HEK293 (cell line): ENCODE measurements at regions of chr19 and their contacts with region 1.

Region 1: DNA sequence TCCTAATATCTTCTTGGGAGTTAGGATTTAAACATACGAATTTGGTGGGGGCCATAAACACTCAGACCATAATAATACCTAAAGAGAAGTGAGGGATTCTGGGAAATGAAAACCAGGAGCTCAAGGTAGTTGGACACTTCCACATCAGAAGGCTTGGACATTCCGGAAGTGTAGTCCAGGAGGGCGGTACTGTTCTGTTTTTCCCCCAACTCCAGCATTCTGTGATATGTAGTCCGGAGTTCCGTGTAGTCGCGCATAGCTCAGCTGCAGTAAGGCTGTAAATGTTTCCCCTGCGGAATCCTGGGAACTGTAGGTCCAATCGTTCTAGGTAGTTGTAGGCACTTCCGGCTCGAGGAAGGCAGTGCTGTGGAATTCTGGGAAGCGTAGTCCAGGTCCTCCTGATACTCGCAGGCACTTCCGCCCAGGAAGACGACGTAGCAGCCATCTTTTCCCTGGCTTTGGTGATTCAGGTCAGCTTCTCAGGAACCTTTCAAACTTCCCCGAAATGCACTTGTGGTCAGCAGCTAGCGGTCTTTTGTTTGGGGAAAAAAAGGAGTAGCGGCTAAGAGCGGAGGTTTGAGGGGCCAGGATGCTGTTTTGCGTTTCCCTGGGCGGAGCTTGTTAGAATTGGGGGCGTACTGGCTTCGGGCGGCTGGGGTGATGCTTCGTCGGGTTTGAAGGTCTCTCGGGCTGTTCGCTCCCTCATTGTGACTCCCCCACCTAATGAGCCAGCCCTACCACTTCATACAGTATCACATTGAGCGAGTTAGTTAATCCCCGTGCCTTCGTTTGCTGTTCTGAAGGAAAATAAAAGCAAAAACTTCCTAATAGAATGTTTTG is at the start of gene ZNF226:
- H3K4me3 ChIP-seq: peak within 1 kb of the TSS; percentile 57
- H3K27ac ChIP-seq: peak within 1 kb of the TSS; percentile 73
- H3K4me1 ChIP-seq: peaks cover 32% of the 10 kb centered on the region
- CTCF ChIP-seq: no peak

Region 2: GRCh38 chr19:42280192-42281145 is 1884.4 kb before region 1 on chr19:
- CTCF ChIA-PET with region 1: no interaction called
- POLR2A ChIA-PET with region 1: no interaction called
- H3K4me3 ChIP-seq: peak overlapping the region; percentile 55
- H3K27ac ChIP-seq: peak overlapping the region; percentile 92
- H3K4me1 ChIP-seq: peaks cover 48% of the 10 kb centered on the region
- CTCF ChIP-seq: no peak; the same call in 1 of the 2 replicates

Region 3: GRCh38 chr19:43950834-43951645 is 213.9 kb before region 1 on chr19 and contains the start of gene ZNF221:
- CTCF ChIA-PET with region 1: no interaction called
- POLR2A ChIA-PET with region 1: interaction called, 13 read pairs
- H3K4me3 ChIP-seq: peak within 1 kb of the TSS; percentile 57
- H3K27ac ChIP-seq: peak within 1 kb of the TSS; percentile 82
- H3K4me1 ChIP-seq: no peaks in the 10 kb centered on the region
- CTCF ChIP-seq: peak; percentile 98

Region 4: GRCh38 chr19:44113138-44113783 is 51.6 kb before region 1 on chr19 and contains the start of gene ZNF225:
- CTCF ChIA-PET with region 1: interaction called, 4 read pairs
- POLR2A ChIA-PET with region 1: interaction called, 29 read pairs
- H3K4me3 ChIP-seq: peak within 1 kb of the TSS; percentile 59
- H3K27ac ChIP-seq: peak within 1 kb of the TSS; percentile 81
- H3K4me1 ChIP-seq: peaks cover 14% of the 10 kb centered on the region
- CTCF ChIP-seq: peak; percentile 79; the same call in 1 of the 2 replicates

Region 5: GRCh38 chr19:44149776-44150175 is 15.1 kb before region 1 on chr19:
- CTCF ChIA-PET with region 1: interaction called, 3 read pairs
- POLR2A ChIA-PET with region 1: interaction called, 10 read pairs
- H3K4me3 ChIP-seq: no peak overlapping the region
- H3K27ac ChIP-seq: no peak overlapping the region
- H3K4me1 ChIP-seq: peaks cover 1% of the 10 kb centered on the region; the same call in 1 of the 2 replicates
- CTCF ChIP-seq: no peak

Region 6: GRCh38 chr19:44182145-44182544 is 17.3 kb after region 1 on chr19:
- CTCF ChIA-PET with region 1: interaction called, 3 read pairs
- POLR2A ChIA-PET with region 1: interaction called, 11 read pairs
- H3K4me3 ChIP-seq: no peak overlapping the region
- H3K27ac ChIP-seq: peak overlapping the region; percentile 26; the same call in 1 of the 2 replicates
- H3K4me1 ChIP-seq: peaks cover 7% of the 10 kb centered on the region; the same call in 1 of the 2 replicates
- CTCF ChIP-seq: peak; percentile 36

Region 7: DNA sequence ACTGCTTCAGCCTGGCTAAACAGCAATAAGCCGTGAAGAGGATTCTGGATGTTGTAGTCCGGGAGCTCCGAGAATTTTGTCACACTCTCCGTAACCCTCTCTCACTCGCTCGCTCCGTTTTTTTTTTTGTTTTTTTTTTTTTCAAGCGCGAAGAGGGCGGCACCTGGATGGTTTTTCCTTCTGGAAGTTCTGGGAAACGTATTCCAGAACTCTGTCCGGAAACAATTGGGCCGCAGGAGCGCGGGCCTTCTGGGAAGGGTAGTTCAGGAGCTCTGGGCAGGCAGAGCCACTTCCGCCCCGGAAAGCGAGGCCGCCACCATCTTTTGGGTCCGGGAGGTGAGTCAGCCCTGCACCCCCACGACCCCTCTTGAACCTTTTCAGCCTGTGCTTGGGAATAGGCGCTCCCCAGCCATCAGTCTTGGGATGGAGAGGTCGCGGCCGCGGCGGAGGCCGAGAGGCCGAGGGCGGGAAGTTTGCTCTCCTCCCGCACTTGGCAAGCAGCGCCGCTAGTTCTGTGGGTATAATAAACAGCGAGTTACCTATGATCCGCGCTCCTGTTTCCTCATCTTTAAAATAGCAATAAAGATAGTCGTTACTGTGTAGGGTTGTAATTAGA is 47.5 kb after region 1 on chr19 and contains the start of gene ZNF227:
- CTCF ChIA-PET with region 1: interaction called, 4 read pairs
- POLR2A ChIA-PET with region 1: interaction called, 143 read pairs
- H3K4me3 ChIP-seq: peak within 1 kb of the TSS; percentile 64
- H3K27ac ChIP-seq: peak within 1 kb of the TSS; percentile 90
- H3K4me1 ChIP-seq: peaks cover 38% of the 10 kb centered on the region
- CTCF ChIP-seq: no peak

Region 8: GRCh38 chr19:44500148-44500956 is 335.5 kb after region 1 on chr19 and contains the start of gene ZNF180:
- CTCF ChIA-PET with region 1: no interaction called
- POLR2A ChIA-PET with region 1: interaction called, 11 read pairs
- H3K4me3 ChIP-seq: peak within 1 kb of the TSS; percentile 78
- H3K27ac ChIP-seq: peak within 1 kb of the TSS; percentile 64
- H3K4me1 ChIP-seq: no peaks in the 10 kb centered on the region
- CTCF ChIP-seq: peak; percentile 97